ENCODE measurements at regions of chr12 and their contacts with region 1.

Region 1: GRCh38 chr12:3073438-3074250 is 3.5 kb upstream of the TSPAN9 start:
- DNase-seq: peak; percentile 68 to 90 (median 83)
- ATAC-seq: peak; percentile 41
- H3K4me3 ChIP-seq: no peak overlapping the region
- H3K4me3 Mint-ChIP-seq: no peak overlapping the region
- H3K27ac ChIP-seq: no peak overlapping the region
- H3K27ac Mint-ChIP-seq: no peak overlapping the region
- H3K4me1 ChIP-seq: peaks cover 10% of the 10 kb centered on the region
- H3K4me1 Mint-ChIP-seq: peaks cover 13% of the 10 kb centered on the region
- H3K27me3 ChIP-seq: peaks cover 0 to 8% of the 10 kb centered on the region in 2 experiments
- H3K27me3 Mint-ChIP-seq: peaks cover 11% of the 10 kb centered on the region
- CTCF ChIP-seq: peak; percentile 91

Region 2: DNA sequence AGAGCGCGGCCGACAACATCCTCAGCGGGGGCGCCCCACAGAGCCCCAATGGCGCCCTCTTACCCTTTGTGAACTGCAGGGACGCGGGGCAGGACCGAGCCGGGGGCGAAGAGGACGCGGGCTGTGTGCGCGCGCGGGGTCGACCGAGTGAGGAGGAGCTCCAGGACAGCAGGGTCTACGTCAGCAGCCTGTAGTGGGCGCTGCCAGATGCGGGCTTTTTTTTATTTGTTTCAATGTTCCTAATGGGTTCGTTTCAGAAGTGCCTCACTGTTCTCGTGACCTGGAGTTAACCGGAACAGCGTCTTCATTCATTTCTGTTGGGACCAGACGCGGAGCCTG is 382.7 kb before region 1 on chr12:
- CTCF ChIA-PET with region 1: no interaction called
- POLR2A ChIA-PET with region 1: no interaction called
- intact Hi-C with region 1: loop called in 1 of 2 experiments (anchors 5 kb)
- DNase-seq: peak in 8 of 9 experiments; percentile 35 to 86 (median 66)
- ATAC-seq: peak; percentile 75
- H3K4me3 ChIP-seq: peak overlapping the region; percentile 50 to 80
- H3K4me3 Mint-ChIP-seq: peak overlapping the region; percentile 92
- H3K27ac ChIP-seq: peak overlapping the region; percentile 75 to 87
- H3K27ac Mint-ChIP-seq: peak overlapping the region; percentile 90
- H3K4me1 ChIP-seq: peaks cover 30% of the 10 kb centered on the region
- H3K4me1 Mint-ChIP-seq: peaks cover 48% of the 10 kb centered on the region
- H3K27me3 ChIP-seq: no peaks in the 10 kb centered on the region
- H3K27me3 Mint-ChIP-seq: no peaks in the 10 kb centered on the region
- CTCF ChIP-seq: no peak

Region 3: DNA sequence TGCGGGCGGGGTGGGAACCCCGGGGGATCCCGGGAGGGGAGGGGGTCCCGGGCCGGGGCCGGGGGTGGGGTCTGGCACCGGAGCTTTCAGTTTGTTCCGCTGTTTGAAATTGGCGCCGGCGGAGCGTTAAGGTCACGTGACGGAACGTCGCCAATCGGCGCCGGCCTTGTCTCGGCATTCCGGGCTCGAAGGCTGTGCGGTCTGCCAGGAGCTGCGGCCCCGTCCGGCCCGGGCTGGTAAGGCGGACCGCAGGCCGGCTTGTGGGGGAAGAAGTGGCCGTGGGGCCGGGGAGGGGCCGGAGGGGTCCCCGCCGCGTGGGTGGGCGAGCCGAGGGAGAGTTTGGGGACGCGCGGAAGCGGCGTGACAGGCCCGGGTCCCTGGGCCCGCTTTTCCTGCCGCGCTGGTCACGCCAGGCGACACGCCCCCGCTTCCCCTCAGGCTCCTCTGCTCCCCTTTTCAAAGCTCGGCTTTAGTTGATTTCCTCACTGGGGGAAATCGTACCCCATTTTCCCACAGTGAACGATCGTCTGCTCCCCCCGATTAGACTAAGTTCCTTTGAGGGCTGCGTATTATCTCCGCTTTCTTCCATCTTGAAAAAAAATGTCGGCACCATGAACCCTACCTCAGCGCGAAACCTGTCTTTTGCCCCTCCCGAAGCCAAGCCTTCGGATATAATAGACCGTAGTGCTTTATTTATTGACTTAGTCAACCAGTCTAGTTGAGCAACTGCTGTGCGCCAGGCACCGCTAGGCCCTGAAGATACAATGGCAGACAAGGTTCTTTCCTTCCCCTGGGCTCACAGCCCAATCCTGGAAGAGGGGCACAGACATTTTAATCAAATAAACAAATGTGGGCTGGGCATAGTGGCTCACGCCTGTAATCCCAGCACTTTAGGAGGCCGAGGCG is 196.3 kb before region 1 on chr12 and contains the starts of genes FOXM1 and RHNO1:
- CTCF ChIA-PET with region 1: no interaction called
- POLR2A ChIA-PET with region 1: no interaction called
- intact Hi-C with region 1: loop called (anchors 10 kb)
- DNase-seq: peak; percentile 73 to 91 (median 85)
- ATAC-seq: peak; percentile 78
- H3K4me3 ChIP-seq: peak within 1 kb of the TSS; percentile 83 to 95
- H3K4me3 Mint-ChIP-seq: peak within 1 kb of the TSS; percentile 99
- H3K27ac ChIP-seq: peak within 1 kb of the TSS; percentile 90 to 91
- H3K27ac Mint-ChIP-seq: peak within 1 kb of the TSS; percentile 100
- H3K4me1 ChIP-seq: peaks cover 22% of the 10 kb centered on the region
- H3K4me1 Mint-ChIP-seq: peaks cover 37% of the 10 kb centered on the region
- H3K27me3 ChIP-seq: no peaks in the 10 kb centered on the region
- H3K27me3 Mint-ChIP-seq: no peaks in the 10 kb centered on the region
- CTCF ChIP-seq: no peak
- total RNA-seq, gene FOXM1: 0.83 to 0.95 TPM
- total RNA-seq, gene RHNO1: 22.4 to 24.4 TPM

Region 4: DNA sequence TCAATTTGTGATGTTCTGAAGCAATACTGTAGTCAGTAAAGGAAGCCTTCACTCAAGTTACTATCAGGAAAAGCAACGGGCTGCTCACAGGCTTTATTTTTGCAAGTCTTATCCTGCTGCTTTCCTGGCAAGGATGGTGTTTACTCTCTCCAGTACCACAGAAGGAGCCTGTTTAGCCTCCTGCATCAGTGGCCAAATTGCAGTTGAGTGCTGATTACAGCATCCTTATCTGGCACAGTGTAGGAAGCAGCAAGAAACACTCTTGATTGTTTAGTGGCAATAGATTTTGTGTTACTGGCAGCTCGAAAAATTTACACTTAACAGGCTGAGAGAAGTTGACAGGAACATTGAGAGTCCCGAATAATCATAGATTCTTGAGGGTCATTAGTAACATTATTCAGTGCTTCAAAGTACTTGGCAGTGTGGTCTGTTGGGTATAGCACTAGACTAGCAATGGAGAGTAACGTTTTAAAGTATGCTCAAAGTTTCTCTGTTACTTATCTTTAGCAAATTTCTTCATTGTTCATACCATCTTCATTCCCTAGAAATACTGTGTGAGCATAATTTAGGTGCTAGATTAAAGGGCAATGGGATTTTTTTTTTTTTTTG is 171.3 kb before region 1 on chr12:
- CTCF ChIA-PET with region 1: no interaction called
- POLR2A ChIA-PET with region 1: no interaction called
- intact Hi-C with region 1: no loop called
- DNase-seq: no peak
- ATAC-seq: no peak
- H3K4me3 ChIP-seq: no peak overlapping the region
- H3K4me3 Mint-ChIP-seq: no peak overlapping the region
- H3K27ac ChIP-seq: no peak overlapping the region
- H3K27ac Mint-ChIP-seq: no peak overlapping the region
- H3K4me1 ChIP-seq: no peaks in the 10 kb centered on the region
- H3K4me1 Mint-ChIP-seq: no peaks in the 10 kb centered on the region
- H3K27me3 ChIP-seq: no peaks in the 10 kb centered on the region
- H3K27me3 Mint-ChIP-seq: no peaks in the 10 kb centered on the region
- CTCF ChIP-seq: no peak

Region 5: GRCh38 chr12:3041558-3042164 is 32.0 kb before region 1 on chr12:
- CTCF ChIA-PET with region 1: no interaction called
- POLR2A ChIA-PET with region 1: no interaction called
- intact Hi-C with region 1: no loop called
- DNase-seq: peak in 7 of 9 experiments; percentile 6 to 65 (median 30)
- ATAC-seq: peak; percentile 56
- H3K4me3 ChIP-seq: no peak overlapping the region
- H3K4me3 Mint-ChIP-seq: no peak overlapping the region
- H3K27ac ChIP-seq: no peak overlapping the region
- H3K27ac Mint-ChIP-seq: no peak overlapping the region
- H3K4me1 ChIP-seq: no peaks in the 10 kb centered on the region
- H3K4me1 Mint-ChIP-seq: peaks cover 2% of the 10 kb centered on the region
- H3K27me3 ChIP-seq: peaks cover 3 to 5% of the 10 kb centered on the region in 2 experiments
- H3K27me3 Mint-ChIP-seq: peaks cover 35% of the 10 kb centered on the region
- CTCF ChIP-seq: no peak

Region 6: DNA sequence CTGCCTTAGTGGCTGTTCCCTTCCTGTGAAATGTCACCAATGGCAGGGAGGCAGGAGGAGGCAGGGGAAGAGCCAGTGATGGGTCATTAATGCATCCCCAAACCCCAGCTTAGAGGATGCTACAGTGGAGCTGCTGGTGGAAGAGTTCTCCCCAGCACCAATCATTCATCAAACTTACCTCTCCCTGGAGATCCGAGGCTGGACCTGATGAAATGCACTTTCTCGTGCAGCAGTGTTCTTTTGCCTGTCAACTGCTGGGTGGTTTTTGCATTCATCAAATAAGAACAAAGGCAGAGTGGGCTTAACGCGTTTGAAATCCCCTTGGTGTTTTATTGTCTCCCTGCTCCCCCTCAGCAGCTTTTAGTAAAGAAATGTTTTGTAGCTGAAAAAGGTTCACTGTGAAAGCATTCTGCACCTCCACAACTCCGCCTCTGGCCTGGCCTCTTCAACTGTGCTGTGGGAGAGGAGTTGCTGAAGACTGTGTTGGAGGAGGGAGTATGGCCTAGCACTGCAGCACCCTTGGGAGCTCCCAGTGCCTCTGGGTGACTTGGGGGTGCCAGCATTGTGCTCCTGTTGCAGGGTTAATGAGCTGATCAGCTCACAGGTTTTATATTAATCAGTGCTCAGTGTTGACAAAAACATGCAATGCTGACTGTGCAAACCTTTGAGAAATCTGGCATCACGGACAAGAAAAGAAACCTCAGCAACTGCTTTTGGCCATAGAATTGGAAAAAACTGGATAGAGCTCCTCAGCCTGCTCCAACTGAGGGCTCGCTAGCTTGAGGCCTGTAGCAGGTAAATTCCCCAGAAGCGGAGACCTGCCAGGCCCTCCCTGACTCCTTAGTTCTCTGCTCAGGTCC is 18.0 kb after region 1 on chr12:
- CTCF ChIA-PET with region 1: interaction called, 15 read pairs
- POLR2A ChIA-PET with region 1: no interaction called
- intact Hi-C with region 1: no loop called
- DNase-seq: no peak
- ATAC-seq: no peak
- H3K4me3 ChIP-seq: no peak overlapping the region
- H3K4me3 Mint-ChIP-seq: no peak overlapping the region
- H3K27ac ChIP-seq: no peak overlapping the region
- H3K27ac Mint-ChIP-seq: no peak overlapping the region
- H3K4me1 ChIP-seq: no peaks in the 10 kb centered on the region
- H3K4me1 Mint-ChIP-seq: no peaks in the 10 kb centered on the region
- H3K27me3 ChIP-seq: no peaks in the 10 kb centered on the region
- H3K27me3 Mint-ChIP-seq: no peaks in the 10 kb centered on the region
- CTCF ChIP-seq: no peak

Region 7: DNA sequence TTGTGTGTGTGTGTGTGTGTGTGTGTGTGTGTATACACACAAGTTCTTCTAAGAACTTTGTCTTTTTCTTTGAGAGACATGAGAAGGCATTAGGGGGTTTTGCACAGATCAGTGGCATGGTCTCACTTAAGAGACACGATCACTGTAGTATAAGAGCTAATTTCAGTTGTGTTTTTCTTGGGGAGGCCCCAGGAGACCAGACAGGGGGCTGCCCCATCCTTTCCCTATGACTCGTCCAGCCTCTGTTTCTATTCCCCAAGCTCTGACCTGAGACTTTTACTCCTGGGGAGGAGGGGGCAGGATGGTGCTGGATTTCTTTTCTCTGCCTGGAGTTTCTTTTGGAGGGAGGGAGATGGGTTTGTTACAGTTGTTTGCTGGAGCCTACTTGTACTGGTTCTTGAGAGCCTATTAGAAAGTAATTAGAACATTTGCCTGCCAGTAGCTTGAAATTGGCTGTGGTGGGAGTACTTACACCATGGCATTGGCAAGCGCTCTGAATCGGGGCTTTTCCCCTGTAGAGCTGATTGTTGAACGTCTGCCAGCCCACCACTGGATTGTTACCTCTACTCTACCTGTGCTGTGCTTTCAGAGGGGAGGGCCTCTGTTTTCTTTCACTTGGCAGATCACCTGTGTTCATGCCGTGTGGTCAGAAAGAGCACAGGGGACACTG is 113.0 kb after region 1 on chr12:
- CTCF ChIA-PET with region 1: no interaction called
- POLR2A ChIA-PET with region 1: no interaction called
- intact Hi-C with region 1: no loop called
- DNase-seq: no peak
- ATAC-seq: no peak
- H3K4me3 ChIP-seq: no peak overlapping the region
- H3K4me3 Mint-ChIP-seq: no peak overlapping the region
- H3K27ac ChIP-seq: no peak overlapping the region
- H3K27ac Mint-ChIP-seq: no peak overlapping the region
- H3K4me1 ChIP-seq: no peaks in the 10 kb centered on the region
- H3K4me1 Mint-ChIP-seq: no peaks in the 10 kb centered on the region
- H3K27me3 ChIP-seq: no peaks in the 10 kb centered on the region
- H3K27me3 Mint-ChIP-seq: peaks cover 10% of the 10 kb centered on the region
- CTCF ChIP-seq: no peak

Region 8: DNA sequence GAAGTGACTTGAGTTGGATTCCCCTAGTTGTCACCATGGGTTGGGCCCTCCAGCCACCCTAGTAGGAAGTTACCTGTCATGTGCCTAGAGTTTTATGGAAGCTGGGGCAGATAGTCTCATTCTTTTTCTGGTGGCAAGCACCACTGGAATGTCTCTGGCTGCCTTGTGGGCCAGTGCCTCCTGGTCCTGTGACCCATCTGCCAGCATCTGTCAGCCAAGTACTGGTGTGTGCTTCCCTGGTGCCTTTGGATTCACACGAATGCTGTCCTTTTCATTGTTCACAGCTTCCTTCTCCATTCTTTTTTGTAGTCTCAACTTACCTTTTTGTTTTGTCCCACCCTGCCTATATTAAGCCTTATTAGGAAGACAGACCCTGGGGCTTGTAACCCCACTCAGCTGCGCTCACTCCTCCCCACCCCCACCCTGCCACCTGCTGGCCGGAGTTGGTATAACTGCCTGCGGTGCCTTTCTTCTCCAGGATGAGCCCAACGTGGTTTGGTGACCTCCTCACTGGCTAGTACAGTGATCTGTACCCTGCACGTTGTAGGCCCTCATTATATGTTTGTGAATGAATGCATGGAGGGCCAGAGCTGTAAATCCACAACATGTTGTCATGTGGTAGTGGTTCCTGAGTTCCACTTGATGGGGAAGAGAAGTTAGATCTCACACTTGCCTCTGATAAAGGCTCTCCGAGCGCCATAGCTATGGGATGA is 129.2 kb after region 1 on chr12:
- CTCF ChIA-PET with region 1: interaction called, 4 read pairs
- POLR2A ChIA-PET with region 1: no interaction called
- intact Hi-C with region 1: loop called in 1 of 2 experiments (anchors 1 kb)
- DNase-seq: peak; percentile 12 to 70 (median 50)
- ATAC-seq: no peak
- H3K4me3 ChIP-seq: no peak overlapping the region
- H3K4me3 Mint-ChIP-seq: no peak overlapping the region
- H3K27ac ChIP-seq: no peak overlapping the region
- H3K27ac Mint-ChIP-seq: no peak overlapping the region
- H3K4me1 ChIP-seq: no peaks in the 10 kb centered on the region
- H3K4me1 Mint-ChIP-seq: peaks cover 6% of the 10 kb centered on the region
- H3K27me3 ChIP-seq: peaks cover 6 to 9% of the 10 kb centered on the region in 2 experiments
- H3K27me3 Mint-ChIP-seq: peaks cover 49% of the 10 kb centered on the region
- CTCF ChIP-seq: peak; percentile 83

Region 9: DNA sequence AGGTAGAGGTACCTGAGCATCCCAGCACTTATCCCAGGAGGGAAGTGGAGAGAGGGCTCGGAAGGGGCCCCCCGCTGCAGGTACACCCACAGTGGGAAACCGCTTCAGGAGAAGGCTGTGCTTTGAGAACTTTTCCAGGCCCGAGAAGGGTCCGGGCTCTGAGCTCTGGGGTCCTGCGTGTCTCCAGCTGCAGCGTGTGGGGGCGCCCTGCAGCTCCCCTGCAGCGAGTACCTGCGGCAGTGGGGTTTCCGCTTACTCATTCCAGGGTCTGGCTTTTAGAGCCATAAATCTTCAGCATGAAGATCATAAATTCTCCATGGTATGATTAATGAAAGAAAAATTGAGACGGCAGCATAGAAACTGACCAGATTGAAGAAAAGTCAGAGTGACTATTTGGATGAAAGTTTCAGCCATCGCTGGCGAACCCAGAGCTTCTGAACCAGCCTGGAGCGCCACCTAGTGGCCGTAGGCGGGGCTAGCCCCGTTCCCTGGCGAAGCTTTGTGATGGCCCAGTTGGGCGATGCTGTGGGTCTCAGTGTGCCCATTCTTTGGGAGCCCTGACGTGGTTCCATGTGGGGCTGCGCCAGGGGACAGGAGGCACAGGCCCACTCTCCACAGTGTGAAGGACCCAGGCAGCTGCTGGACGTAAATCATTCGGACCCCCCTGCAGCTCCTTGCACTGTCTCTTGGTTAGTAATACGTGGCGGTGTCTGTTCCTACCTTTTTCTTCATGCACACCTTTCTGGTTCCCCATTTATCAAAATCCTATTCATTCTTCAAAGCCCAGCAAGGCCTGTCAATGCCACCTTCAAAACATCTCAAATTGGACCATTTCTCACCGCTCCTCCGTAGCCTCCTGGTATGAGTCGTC is 201.8 kb after region 1 on chr12:
- CTCF ChIA-PET with region 1: interaction called, 83 read pairs
- POLR2A ChIA-PET with region 1: no interaction called
- intact Hi-C with region 1: loop called in 1 of 2 experiments (anchors 1 kb)
- DNase-seq: peak; percentile 40 to 84 (median 64)
- ATAC-seq: peak; percentile 58
- H3K4me3 ChIP-seq: no peak overlapping the region
- H3K4me3 Mint-ChIP-seq: peak overlapping the region; percentile 22
- H3K27ac ChIP-seq: no peak overlapping the region
- H3K27ac Mint-ChIP-seq: no peak overlapping the region
- H3K4me1 ChIP-seq: no peaks in the 10 kb centered on the region
- H3K4me1 Mint-ChIP-seq: no peaks in the 10 kb centered on the region
- H3K27me3 ChIP-seq: no peaks in the 10 kb centered on the region
- H3K27me3 Mint-ChIP-seq: peaks cover 21% of the 10 kb centered on the region
- CTCF ChIP-seq: peak; percentile 89

Region 10: DNA sequence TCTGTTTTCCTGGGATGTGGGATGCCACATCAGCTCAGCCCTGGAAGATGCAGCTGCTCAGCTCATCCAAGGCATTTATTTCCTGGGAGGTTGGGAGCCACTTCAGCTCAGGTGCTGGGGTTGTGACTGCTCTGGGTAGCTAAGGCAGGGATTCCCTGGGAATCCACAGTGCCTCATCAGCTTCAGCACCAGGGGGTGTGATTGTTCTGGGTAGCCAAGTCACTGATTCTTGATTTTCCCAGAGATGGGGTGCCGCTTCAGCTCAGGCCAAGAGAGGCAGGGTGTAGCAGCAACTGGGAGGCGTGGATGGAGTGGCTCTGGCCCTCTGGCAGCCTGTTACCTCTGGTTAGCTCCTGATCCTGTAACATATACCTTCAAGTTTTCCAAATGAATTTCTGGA is 336.0 kb after region 1 on chr12:
- CTCF ChIA-PET with region 1: no interaction called
- POLR2A ChIA-PET with region 1: no interaction called
- intact Hi-C with region 1: no loop called
- DNase-seq: no peak
- ATAC-seq: no peak
- H3K4me3 ChIP-seq: no peak overlapping the region
- H3K4me3 Mint-ChIP-seq: no peak overlapping the region
- H3K27ac ChIP-seq: no peak overlapping the region
- H3K27ac Mint-ChIP-seq: no peak overlapping the region
- H3K4me1 ChIP-seq: no peaks in the 10 kb centered on the region
- H3K4me1 Mint-ChIP-seq: no peaks in the 10 kb centered on the region
- H3K27me3 ChIP-seq: peaks cover 0 to 4% of the 10 kb centered on the region in 2 experiments
- H3K27me3 Mint-ChIP-seq: peaks cover 2% of the 10 kb centered on the region
- CTCF ChIP-seq: no peak

Region 11: DNA sequence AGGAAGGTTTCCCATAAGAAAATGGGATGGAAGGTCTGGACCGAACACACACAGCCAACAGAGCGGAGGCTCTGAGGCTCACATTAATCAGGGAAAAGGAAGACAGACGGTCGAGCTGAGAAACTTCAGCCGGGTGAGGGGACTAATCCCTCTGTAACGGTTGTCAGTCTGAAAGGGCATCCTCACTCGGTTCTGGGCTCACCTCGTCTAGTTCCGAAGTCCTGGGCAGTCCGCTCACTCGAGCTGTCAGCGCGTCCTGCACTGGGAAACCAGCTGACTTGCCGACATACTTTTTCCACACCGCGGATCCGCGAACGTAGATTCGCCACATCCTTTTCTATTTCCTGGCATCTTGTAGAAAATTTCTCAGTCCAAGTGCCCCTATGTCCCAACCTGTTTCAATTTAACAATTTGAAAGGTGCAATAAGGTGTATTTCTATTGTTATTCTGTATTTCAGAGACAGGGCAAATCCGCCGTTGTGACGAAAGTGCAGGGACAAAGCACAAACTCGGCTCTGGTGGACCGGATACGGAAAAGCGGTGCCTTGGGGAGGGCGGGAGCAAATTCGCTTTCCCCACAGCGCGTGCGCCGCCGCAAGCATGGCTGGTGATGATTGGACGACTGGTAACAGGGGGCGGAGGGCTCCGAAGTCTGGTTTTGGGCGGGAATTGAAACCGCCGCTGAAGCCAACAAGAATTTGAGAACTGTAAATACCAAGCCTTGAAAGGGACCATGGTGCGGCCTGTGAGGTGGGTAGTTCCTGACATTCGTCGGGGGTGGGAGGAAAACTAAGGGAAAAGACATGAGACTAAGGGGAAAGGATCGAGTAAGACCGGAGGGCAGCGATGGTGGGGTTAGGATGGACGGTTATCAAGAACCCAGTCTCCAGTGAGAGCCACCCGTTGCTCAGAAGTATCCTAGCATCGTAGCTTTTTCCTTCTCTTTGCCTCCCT is 1464.8 kb after region 1 on chr12 and contains the start of gene RAD51AP1:
- CTCF ChIA-PET with region 1: no interaction called
- POLR2A ChIA-PET with region 1: no interaction called
- intact Hi-C with region 1: loop called in 1 of 2 experiments (anchors 10 kb)
- DNase-seq: peak; percentile 89 to 98 (median 94)
- ATAC-seq: peak; percentile 99
- H3K4me3 ChIP-seq: peak within 1 kb of the TSS; percentile 68 to 97
- H3K4me3 Mint-ChIP-seq: peak within 1 kb of the TSS; percentile 98
- H3K27ac ChIP-seq: peak within 1 kb of the TSS; percentile 85 to 97
- H3K27ac Mint-ChIP-seq: peak within 1 kb of the TSS; percentile 98
- H3K4me1 ChIP-seq: peaks cover 7% of the 10 kb centered on the region
- H3K4me1 Mint-ChIP-seq: peaks cover 26% of the 10 kb centered on the region
- H3K27me3 ChIP-seq: no peaks in the 10 kb centered on the region
- H3K27me3 Mint-ChIP-seq: no peaks in the 10 kb centered on the region
- CTCF ChIP-seq: no peak
- total RNA-seq, gene RAD51AP1: 0.87 to 1.6 TPM

Measured in CD8-positive, alpha-beta T cell (primary cell).